Activated T-helper 1 cell treated with anti-CD3 and anti-CD28 coated beads, Interleukin-12 subunit alpha, Interleukin-12 subunit beta, Interleukin-2, Interleukin-4 antibody, amounts not matched to agents 30 ng/mL and 10 ng/mL and 1 ng/mL, durations not matched to agents 14 hours and 24 hours and 36 hours (primary cell): ENCODE measurements at regions of chr20 and their contacts with region 1.

Region 1: GRCh38 chr20:37990571-37991151 is 42.6 kb downstream of the TTI1 start:
- DNase-seq: peak; percentile 69
- H3K4me3 Mint-ChIP-seq: peak overlapping the region; percentile 53
- H3K27ac Mint-ChIP-seq: peak overlapping the region; percentile 83
- H3K4me1 Mint-ChIP-seq: peaks cover 25% of the 10 kb centered on the region
- H3K27me3 Mint-ChIP-seq: no peaks in the 10 kb centered on the region

Region 2: GRCh38 chr20:37564388-37565133 is 426.1 kb before region 1 on chr20:
- intact Hi-C with region 1: loop called (anchors 1 kb)
- DNase-seq: peak; percentile 20
- H3K4me3 Mint-ChIP-seq: no peak overlapping the region
- H3K27ac Mint-ChIP-seq: no peak overlapping the region
- H3K4me1 Mint-ChIP-seq: no peaks in the 10 kb centered on the region
- H3K27me3 Mint-ChIP-seq: peaks cover 32% of the 10 kb centered on the region

Region 3: GRCh38 chr20:37693635-37694626 is 296.7 kb before region 1 on chr20 and contains the start of gene CTNNBL1:
- intact Hi-C with region 1: loop called (anchors 2 kb)
- DNase-seq: peak; percentile 95
- H3K4me3 Mint-ChIP-seq: peak within 1 kb of the TSS; percentile 96
- H3K27ac Mint-ChIP-seq: peak within 1 kb of the TSS; percentile 92
- H3K4me1 Mint-ChIP-seq: peaks cover 27% of the 10 kb centered on the region
- H3K27me3 Mint-ChIP-seq: peaks cover 7% of the 10 kb centered on the region
- total RNA-seq, gene CTNNBL1: 93.5 and 105 TPM in 2 replicates

Region 4: GRCh38 chr20:37723668-37724067 is 267.0 kb before region 1 on chr20:
- intact Hi-C with region 1: no loop called
- DNase-seq: no peak
- H3K4me3 Mint-ChIP-seq: no peak overlapping the region
- H3K27ac Mint-ChIP-seq: no peak overlapping the region
- H3K4me1 Mint-ChIP-seq: peaks cover 5% of the 10 kb centered on the region
- H3K27me3 Mint-ChIP-seq: no peaks in the 10 kb centered on the region

Region 5: GRCh38 chr20:37901654-37902503 is 88.8 kb before region 1 on chr20:
- intact Hi-C with region 1: loop called (anchors 5 kb)
- DNase-seq: no peak
- H3K4me3 Mint-ChIP-seq: peak overlapping the region; percentile 51
- H3K27ac Mint-ChIP-seq: no peak overlapping the region
- H3K4me1 Mint-ChIP-seq: peaks cover 15% of the 10 kb centered on the region
- H3K27me3 Mint-ChIP-seq: peaks cover 51% of the 10 kb centered on the region

Region 6: GRCh38 chr20:38001173-38001872 is 10.7 kb after region 1 on chr20:
- intact Hi-C with region 1: loop called (anchors 1 kb)
- DNase-seq: no peak
- H3K4me3 Mint-ChIP-seq: no peak overlapping the region
- H3K27ac Mint-ChIP-seq: peak overlapping the region; percentile 55
- H3K4me1 Mint-ChIP-seq: peaks cover 36% of the 10 kb centered on the region
- H3K27me3 Mint-ChIP-seq: no peaks in the 10 kb centered on the region

Region 7: GRCh38 chr20:38043512-38044300 is 53.0 kb after region 1 on chr20:
- intact Hi-C with region 1: no loop called
- DNase-seq: no peak
- H3K4me3 Mint-ChIP-seq: no peak overlapping the region
- H3K27ac Mint-ChIP-seq: peak overlapping the region; percentile 59
- H3K4me1 Mint-ChIP-seq: peaks cover 36% of the 10 kb centered on the region
- H3K27me3 Mint-ChIP-seq: no peaks in the 10 kb centered on the region

Region 8: DNA sequence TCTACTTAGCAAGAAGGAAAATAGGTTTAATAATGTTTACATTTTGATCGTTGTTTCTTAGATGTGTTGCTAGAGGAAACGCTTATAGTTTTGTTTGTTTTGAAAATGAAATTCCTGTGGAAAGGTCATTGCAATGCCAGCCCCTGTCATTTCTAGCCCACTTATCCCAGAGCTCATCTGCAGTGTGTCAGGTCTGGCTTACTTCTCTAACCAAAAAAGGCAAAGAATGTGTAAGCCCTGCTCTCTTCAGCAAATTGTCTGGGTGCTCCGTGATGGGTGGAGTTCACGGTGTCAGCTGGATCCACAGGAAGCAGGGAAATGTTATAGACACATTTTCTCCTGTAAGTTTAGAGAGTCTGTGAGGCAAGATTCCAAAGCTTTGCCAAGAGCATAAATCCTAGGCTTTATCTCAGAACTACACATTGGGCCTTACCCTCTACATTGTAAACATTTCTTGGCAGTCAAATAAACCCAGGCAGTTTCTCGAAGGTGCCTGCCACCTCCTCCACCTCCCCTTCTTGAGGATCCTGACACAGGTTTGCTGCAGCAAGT is 93.8 kb after region 1 on chr20:
- intact Hi-C with region 1: no loop called
- DNase-seq: no peak
- H3K4me3 Mint-ChIP-seq: no peak overlapping the region
- H3K27ac Mint-ChIP-seq: no peak overlapping the region
- H3K4me1 Mint-ChIP-seq: peaks cover 8% of the 10 kb centered on the region
- H3K27me3 Mint-ChIP-seq: no peaks in the 10 kb centered on the region

Region 9: DNA sequence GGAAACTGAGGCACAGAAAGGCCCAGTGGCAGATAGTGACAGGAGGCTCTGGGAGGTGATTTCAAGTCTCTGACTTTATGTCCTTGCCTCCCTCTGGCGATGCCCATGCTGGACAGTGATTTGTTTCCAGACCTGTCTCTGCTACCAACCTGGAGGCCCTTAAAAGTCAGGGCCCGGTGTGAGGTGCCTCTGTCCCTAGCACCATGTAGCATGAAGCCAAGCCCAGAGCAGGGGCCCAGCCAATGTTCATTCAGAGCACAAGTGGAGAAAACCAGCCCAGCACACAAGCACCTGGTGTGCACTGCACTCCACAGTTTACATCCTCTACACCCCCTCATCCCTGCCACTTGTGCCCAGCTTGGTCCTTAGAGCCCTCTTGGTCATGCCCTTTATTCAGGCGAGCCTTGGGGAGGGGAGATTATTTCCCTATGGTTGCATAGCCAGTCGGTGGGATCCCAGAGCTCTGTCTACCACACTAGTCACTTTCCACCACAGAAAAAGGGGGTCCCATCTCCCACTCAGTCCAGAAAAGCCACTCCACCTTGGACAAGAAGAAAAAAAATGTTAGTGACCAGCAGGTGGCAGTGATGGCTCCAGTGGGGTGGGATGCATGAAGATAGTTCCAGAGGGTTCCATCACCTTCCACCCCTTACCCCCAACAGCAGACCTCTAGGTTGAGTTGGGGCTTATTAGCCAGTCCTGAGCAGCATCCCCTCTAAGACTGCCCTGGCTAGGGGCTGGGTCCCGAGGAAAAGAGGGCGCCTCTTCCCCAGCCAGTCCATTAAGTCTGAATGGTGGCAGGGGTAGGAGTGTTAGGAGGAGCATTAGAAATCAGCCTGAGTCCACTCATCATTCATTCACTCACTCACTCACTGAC is 239.0 kb after region 1 on chr20:
- intact Hi-C with region 1: no loop called
- DNase-seq: no peak
- H3K4me3 Mint-ChIP-seq: no peak overlapping the region
- H3K27ac Mint-ChIP-seq: no peak overlapping the region
- H3K4me1 Mint-ChIP-seq: peaks cover 5% of the 10 kb centered on the region
- H3K27me3 Mint-ChIP-seq: peaks cover 10% of the 10 kb centered on the region